Activated CD4-positive, alpha-beta memory T cell treated with anti-CD3 and anti-CD28 coated beads, Interleukin-2, amount 10 ng/mL, durations not matched to agents 7 days and 5 days (primary cell): ENCODE measurements at regions of chr20 and their contacts with region 1.

Region 1: GRCh38 chr20:48722737-48723191 is 105.0 kb downstream of the PREX1 start:
- DNase-seq: no peak
- H3K4me3 Mint-ChIP-seq: no peak overlapping the region
- H3K27ac Mint-ChIP-seq: peak overlapping the region; percentile 64
- H3K4me1 Mint-ChIP-seq: peaks cover 76% of the 10 kb centered on the region
- H3K27me3 Mint-ChIP-seq: no peaks in the 10 kb centered on the region

Region 2: GRCh38 chr20:48760403-48760983 is 37.7 kb after region 1 on chr20:
- CTCF ChIA-PET with region 1: no interaction called
- POLR2A ChIA-PET with region 1: interaction called, 14 read pairs
- DNase-seq: peak; percentile 81
- H3K4me3 Mint-ChIP-seq: peak overlapping the region; percentile 57
- H3K27ac Mint-ChIP-seq: peak overlapping the region; percentile 100
- H3K4me1 Mint-ChIP-seq: peaks cover 93% of the 10 kb centered on the region
- H3K27me3 Mint-ChIP-seq: no peaks in the 10 kb centered on the region

Region 3: DNA sequence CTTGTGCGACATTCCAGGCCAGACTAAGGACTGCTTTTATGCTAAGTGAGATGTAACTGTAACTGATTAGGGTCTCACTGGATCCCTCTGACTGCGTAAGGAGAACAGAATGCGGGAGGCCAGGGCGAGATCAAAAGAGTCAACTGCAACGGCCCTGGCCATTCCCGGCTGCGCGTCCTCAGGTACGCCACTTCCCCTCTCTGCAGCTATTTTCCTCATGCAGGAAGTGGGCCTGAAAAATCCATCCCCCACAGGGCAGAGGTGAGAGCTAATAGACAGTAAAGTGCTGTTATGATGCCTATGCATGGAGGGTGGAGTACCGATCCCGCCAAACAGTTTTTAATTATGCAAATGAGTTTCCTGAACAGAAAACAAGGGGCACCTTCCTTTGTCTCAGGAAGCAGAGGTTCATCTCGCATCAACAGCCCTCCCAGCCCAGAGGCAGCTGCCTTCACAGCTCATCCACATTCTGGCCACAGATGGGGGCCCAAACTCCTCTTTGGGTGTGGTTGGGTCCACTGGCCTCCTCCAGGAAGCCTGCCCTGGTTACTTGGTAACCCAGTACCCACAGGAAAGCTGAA is 95.7 kb after region 1 on chr20:
- CTCF ChIA-PET with region 1: interaction called, 5 read pairs
- POLR2A ChIA-PET with region 1: interaction called, 16 read pairs
- DNase-seq: peak; percentile 75
- H3K4me3 Mint-ChIP-seq: peak overlapping the region; percentile 98
- H3K27ac Mint-ChIP-seq: peak overlapping the region; percentile 97
- H3K4me1 Mint-ChIP-seq: no peaks in the 10 kb centered on the region
- H3K27me3 Mint-ChIP-seq: no peaks in the 10 kb centered on the region